Heart right ventricle (tissue), 16 donors: ENCODE measurements at regions of chr6 and their contacts with region 1.

Region 1: DNA sequence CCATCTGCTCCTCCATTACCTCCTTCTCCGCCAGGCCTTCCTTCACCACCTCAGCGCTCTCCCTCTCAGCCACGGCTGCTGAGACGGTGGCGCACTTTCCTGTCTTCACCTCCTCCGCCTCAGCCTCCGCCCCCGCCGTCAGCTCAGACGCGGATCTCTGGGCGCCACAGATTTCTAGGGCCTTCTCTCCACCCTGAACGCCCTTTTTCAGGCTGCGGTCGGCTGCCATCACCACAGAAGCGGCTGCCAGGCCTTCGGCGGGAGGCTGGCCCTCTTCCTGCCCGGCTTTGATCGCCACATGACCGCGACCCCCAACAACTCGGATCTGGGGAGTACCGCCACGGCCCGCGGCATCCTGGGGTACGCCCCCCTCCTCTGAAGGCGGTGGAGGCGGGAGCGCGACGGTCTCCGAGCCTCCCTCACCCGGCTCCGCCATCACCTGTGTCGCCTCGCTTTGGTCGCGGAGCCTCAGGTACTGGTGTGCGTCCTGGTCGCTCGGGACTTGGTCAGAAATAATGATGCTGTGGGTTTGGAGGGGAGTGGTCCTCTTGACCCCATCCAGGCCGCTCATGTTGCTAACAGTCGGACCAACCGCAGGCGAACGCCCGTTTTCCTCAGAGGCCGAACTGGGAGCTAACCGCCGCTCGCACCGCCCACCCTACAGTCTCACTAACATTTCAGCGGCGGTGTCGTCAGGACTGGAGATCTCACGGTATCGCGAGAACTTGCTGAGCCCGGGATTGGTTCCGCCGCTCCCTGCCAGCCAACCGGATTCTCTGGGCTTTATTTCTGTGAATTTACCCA is at the start of gene TSPYL1:
- DNase-seq: peak; percentile 94 to 98
- ATAC-seq: peak; percentile 97 to 99 (median 98)
- H3K4me3 ChIP-seq: peak within 1 kb of the TSS; percentile 57 to 99 (median 90)
- H3K27ac ChIP-seq: peak within 1 kb of the TSS; percentile 89 to 100 (median 98)
- H3K4me1 ChIP-seq: peaks cover 3 to 71% (median 55%) of the 10 kb centered on the region in 9 donors
- H3K27me3 ChIP-seq: no peaks in the 10 kb centered on the region
- CTCF ChIP-seq: peak in 1 of 9 donors; percentile 24
- total RNA-seq, gene TSPYL1: 76.6 to 143 (median 114) TPM

Region 2: GRCh38 chr6:116034327-116034726 is 245.1 kb before region 1 on chr6:
- intact Hi-C with region 1: no loop called
- DNase-seq: no peak
- ATAC-seq: peak in 3 of 8 donors; percentile 38 to 49 (median 42)
- H3K4me3 ChIP-seq: no peak overlapping the region
- H3K27ac ChIP-seq: peak overlapping the region in 1 of 10 donors; percentile 27
- H3K4me1 ChIP-seq: peaks cover 0 to 50% (median 22%) of the 10 kb centered on the region in 9 donors
- H3K27me3 ChIP-seq: no peaks in the 10 kb centered on the region
- CTCF ChIP-seq: no peak

Region 3: GRCh38 chr6:116253505-116254296 is 25.8 kb before region 1 on chr6 and contains the start of gene TSPYL4:
- intact Hi-C with region 1: loop called in 1 of 10 experiments (anchors 1 kb)
- DNase-seq: peak; percentile 91 to 96
- ATAC-seq: peak; percentile 95 to 99 (median 98)
- H3K4me3 ChIP-seq: peak within 1 kb of the TSS; percentile 78 to 97 (median 86)
- H3K27ac ChIP-seq: peak within 1 kb of the TSS; percentile 57 to 92 (median 88)
- H3K4me1 ChIP-seq: peaks cover 0 to 66% (median 57%) of the 10 kb centered on the region in 9 donors
- H3K27me3 ChIP-seq: no peaks in the 10 kb centered on the region
- CTCF ChIP-seq: no peak
- total RNA-seq, gene TSPYL4: 24.4 to 38.9 (median 28.9) TPM

Region 4: GRCh38 chr6:116444092-116444491 is 164.6 kb after region 1 on chr6:
- intact Hi-C with region 1: loop called in 2 of 10 experiments (anchors 10 kb)
- DNase-seq: no peak
- ATAC-seq: peak in 1 of 8 donors; percentile 56
- H3K4me3 ChIP-seq: no peak overlapping the region
- H3K27ac ChIP-seq: no peak overlapping the region
- H3K4me1 ChIP-seq: peaks cover 0 to 50% (median 0%) of the 10 kb centered on the region in 9 donors
- H3K27me3 ChIP-seq: no peaks in the 10 kb centered on the region
- CTCF ChIP-seq: peak in 7 of 9 donors; percentile 41 to 61 (median 53)

Region 5: GRCh38 chr6:116561377-116562018 is 282.0 kb after region 1 on chr6:
- intact Hi-C with region 1: loop called in 6 of 10 experiments (anchors 10 kb)
- DNase-seq: peak; percentile 64 to 71
- ATAC-seq: peak in 7 of 8 donors; percentile 43 to 67 (median 65)
- H3K4me3 ChIP-seq: peak overlapping the region in 1 of 10 donors; percentile 4
- H3K27ac ChIP-seq: no peak overlapping the region
- H3K4me1 ChIP-seq: peaks cover 0 to 12% (median 8%) of the 10 kb centered on the region in 9 donors
- H3K27me3 ChIP-seq: peaks cover 0 to 3% (median 0%) of the 10 kb centered on the region in 7 donors
- CTCF ChIP-seq: peak; percentile 81 to 96 (median 95)

Region 6: GRCh38 chr6:116570856-116571682 is 291.6 kb after region 1 on chr6 and contains the start of gene RWDD1:
- intact Hi-C with region 1: loop called in 7 of 10 experiments (anchors 5 to 10 kb)
- DNase-seq: peak; percentile 99
- ATAC-seq: peak; percentile 98 to 99 (median 98)
- H3K4me3 ChIP-seq: peak within 1 kb of the TSS; percentile 66 to 95 (median 76)
- H3K27ac ChIP-seq: peak within 1 kb of the TSS; percentile 55 to 96 (median 90)
- H3K4me1 ChIP-seq: peaks cover 2 to 49% (median 32%) of the 10 kb centered on the region in 9 donors
- H3K27me3 ChIP-seq: no peaks in the 10 kb centered on the region
- CTCF ChIP-seq: peak in 4 of 9 donors; percentile 4 to 17 (median 12)
- total RNA-seq, gene RWDD1: 40.8 to 79.7 (median 49.7) TPM